ENCODE measurements at regions of chr16 and their contacts with region 1.

Region 1: GRCh38 chr16:66751303-66751991 is at the start of gene DYNC1LI2:
- DNase-seq: peak; percentile 84 to 95 (median 93)
- ATAC-seq: peak; percentile 89
- H3K4me3 ChIP-seq: peak within 1 kb of the TSS; percentile 97
- H3K27ac ChIP-seq: peak within 1 kb of the TSS; percentile 94
- H3K4me1 ChIP-seq: peaks cover 9 to 15% of the 10 kb centered on the region in 2 experiments; a peak in 4 of 5 replicates
- H3K27me3 ChIP-seq: no peaks in the 10 kb centered on the region
- CTCF ChIP-seq: peak; percentile 70 to 89 (median 80)
- EP300 ChIP-seq: 0 out of 2 replicates have a peak, but pooled peaks have one; percentile 10
- POLR2A ChIP-seq: peak; percentile 80
- RAD21 ChIP-seq: peak; percentile 51 to 67
- polyA plus RNA-seq, gene DYNC1LI2: 5.1 to 7.0 TPM

Region 2: DNA sequence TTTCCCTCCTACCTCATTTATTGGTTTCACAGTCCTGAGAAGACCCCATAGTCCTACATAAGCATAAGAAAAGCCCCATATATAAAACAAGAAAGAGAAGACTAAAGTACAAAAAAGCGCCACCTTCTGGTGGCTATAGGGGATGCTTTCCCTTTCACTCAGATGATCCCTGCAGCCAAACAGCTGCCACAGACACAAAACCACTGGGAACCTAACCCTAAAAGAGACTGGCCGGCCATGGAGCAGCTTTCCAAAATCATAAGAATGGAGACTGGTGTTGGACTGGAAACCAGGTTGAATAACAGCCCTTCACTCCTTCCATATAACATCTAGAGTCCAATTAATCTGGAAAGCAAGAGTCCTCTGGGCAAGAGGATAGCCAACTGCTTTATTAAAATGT is 11.4 kb before region 1 on chr16:
- CTCF ChIA-PET with region 1: no interaction called
- POLR2A ChIA-PET with region 1: interaction called, 22 read pairs
- in situ Hi-C with region 1: no loop called
- intact Hi-C with region 1: no loop called
- DNase-seq: peak; percentile 56 to 73 (median 67)
- ATAC-seq: peak; percentile 80
- H3K4me3 ChIP-seq: no peak overlapping the region
- H3K27ac ChIP-seq: peak overlapping the region; percentile 43; the same call in 1 of the 3 replicates
- H3K4me1 ChIP-seq: peaks cover 12 to 24% of the 10 kb centered on the region in 2 experiments; a peak in 4 of 5 replicates
- H3K27me3 ChIP-seq: no peaks in the 10 kb centered on the region
- CTCF ChIP-seq: peak; percentile 59 to 72 (median 67); a peak in 5 of 6 replicates
- EP300 ChIP-seq: no peak
- POLR2A ChIP-seq: no peak
- RAD21 ChIP-seq: peak; percentile 15 to 38; a peak in 2 of 4 replicates